B cell (primary cell): ENCODE measurements at regions of chr1 and their contacts with region 1.

Region 1: DNA sequence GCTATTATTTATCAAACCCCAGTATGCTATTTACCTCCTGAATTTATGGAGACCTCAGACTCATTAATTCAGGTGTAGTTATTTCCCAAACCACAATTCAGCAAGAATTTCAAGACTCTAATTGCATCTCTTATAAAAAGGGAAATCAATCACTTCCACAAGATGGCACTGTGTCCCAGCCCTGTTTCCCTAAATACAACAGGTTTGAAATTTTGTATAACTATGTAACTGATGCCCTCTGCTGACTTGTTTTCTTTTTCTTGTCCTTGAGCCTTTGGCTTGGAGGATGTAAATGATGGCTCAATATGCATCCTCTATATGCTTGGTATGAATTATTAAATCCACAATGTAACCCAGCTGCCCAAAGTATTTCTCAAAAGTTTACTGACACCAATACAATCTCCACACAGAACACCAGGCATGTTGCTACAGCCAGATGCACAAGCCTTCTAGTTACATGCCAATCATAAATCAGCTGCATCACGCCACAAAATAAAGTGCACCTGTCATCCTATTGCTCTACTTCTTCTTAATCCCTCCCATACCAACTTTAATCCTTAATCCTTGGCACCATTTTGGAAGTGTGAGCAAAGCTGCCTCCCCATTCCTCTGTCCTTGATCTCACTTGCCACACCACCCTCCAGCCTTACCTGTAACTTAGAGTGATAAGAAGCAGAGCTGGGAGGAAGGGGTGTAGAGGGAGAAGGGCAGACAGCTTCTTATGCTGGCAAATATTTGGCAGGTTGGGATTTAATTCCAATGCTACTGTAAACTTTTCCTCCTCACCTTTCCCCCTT is 9.0 kb downstream of the C1orf105 start:
- DNase-seq: peak; percentile 71
- ATAC-seq: peak; percentile 76
- H3K4me3 ChIP-seq: no peak overlapping the region
- H3K4me3 Mint-ChIP-seq: no peak overlapping the region
- H3K27ac ChIP-seq: no peak overlapping the region
- H3K27ac Mint-ChIP-seq: no peak overlapping the region
- H3K4me1 ChIP-seq: peaks cover 10 to 12% of the 10 kb centered on the region in 2 donors
- H3K4me1 Mint-ChIP-seq: peaks cover 14% of the 10 kb centered on the region
- H3K27me3 ChIP-seq: no peaks in the 10 kb centered on the region
- H3K27me3 Mint-ChIP-seq: no peaks in the 10 kb centered on the region
- CTCF ChIP-seq: peak; percentile 71

Region 2: DNA sequence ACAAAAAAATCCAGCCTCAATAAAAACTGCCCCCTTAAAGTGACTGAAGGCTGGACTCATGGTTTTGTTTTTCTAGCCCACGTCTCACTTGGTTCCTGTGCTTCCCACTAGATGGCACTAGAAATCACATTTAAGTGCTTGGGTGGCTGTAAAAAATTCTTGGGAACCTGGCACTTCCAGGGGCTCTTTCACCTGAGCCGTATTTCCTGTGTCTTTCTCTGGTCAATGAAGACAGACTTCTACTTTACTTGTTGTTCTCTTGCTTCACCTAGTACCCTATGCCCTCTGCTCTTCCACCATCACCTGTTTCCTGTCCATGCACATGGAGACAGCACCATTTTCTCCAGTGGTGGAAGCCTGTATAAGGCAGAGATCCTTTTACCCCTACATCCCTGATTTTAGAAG is 628.0 kb before region 1 on chr1:
- CTCF ChIA-PET with region 1: interaction called, 5 read pairs
- POLR2A ChIA-PET with region 1: no interaction called
- intact Hi-C with region 1: loop called (anchors 1 kb)
- DNase-seq: peak; percentile 38
- ATAC-seq: peak; percentile 51
- H3K4me3 ChIP-seq: no peak overlapping the region
- H3K4me3 Mint-ChIP-seq: no peak overlapping the region
- H3K27ac ChIP-seq: no peak overlapping the region
- H3K27ac Mint-ChIP-seq: no peak overlapping the region
- H3K4me1 ChIP-seq: peaks cover 7 to 11% of the 10 kb centered on the region in 2 donors
- H3K4me1 Mint-ChIP-seq: peaks cover 15% of the 10 kb centered on the region
- H3K27me3 ChIP-seq: no peaks in the 10 kb centered on the region
- H3K27me3 Mint-ChIP-seq: no peaks in the 10 kb centered on the region
- CTCF ChIP-seq: peak; percentile 82

Region 3: GRCh38 chr1:172089768-172090510 is 339.6 kb before region 1 on chr1:
- CTCF ChIA-PET with region 1: interaction called, 23 read pairs
- POLR2A ChIA-PET with region 1: no interaction called
- intact Hi-C with region 1: loop called (anchors 1 kb)
- DNase-seq: peak; percentile 75
- ATAC-seq: peak; percentile 80
- H3K4me3 ChIP-seq: peak overlapping the region in 1 of 5 experiments; percentile 7
- H3K4me3 Mint-ChIP-seq: no peak overlapping the region
- H3K27ac ChIP-seq: no peak overlapping the region
- H3K27ac Mint-ChIP-seq: no peak overlapping the region
- H3K4me1 ChIP-seq: no peaks in the 10 kb centered on the region
- H3K4me1 Mint-ChIP-seq: peaks cover 9% of the 10 kb centered on the region
- H3K27me3 ChIP-seq: no peaks in the 10 kb centered on the region
- H3K27me3 Mint-ChIP-seq: no peaks in the 10 kb centered on the region
- CTCF ChIP-seq: peak; percentile 84

Region 4: DNA sequence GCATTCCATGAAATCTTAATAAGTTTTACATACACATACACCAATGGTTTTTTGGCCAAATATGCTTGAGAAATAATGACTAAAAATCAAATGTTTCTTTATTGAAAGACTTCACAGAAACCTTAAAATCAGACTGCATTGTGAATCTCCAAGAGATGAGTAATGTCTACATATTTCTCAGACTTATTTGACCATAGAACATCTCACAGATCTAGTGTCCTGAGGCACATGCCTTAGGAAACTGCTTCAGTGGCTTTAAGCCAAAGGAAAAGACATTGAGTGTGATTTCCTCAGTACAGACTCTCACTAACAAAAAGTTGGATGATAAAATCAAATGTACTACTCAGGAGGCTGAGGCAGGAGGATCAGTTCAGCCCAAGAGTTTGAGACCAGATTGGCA is 15.2 kb before region 1 on chr1:
- CTCF ChIA-PET with region 1: interaction called, 14 read pairs
- POLR2A ChIA-PET with region 1: no interaction called
- intact Hi-C with region 1: no loop called
- DNase-seq: no peak
- ATAC-seq: no peak
- H3K4me3 ChIP-seq: no peak overlapping the region
- H3K4me3 Mint-ChIP-seq: no peak overlapping the region
- H3K27ac ChIP-seq: no peak overlapping the region
- H3K27ac Mint-ChIP-seq: no peak overlapping the region
- H3K4me1 ChIP-seq: no peaks in the 10 kb centered on the region
- H3K4me1 Mint-ChIP-seq: no peaks in the 10 kb centered on the region
- H3K27me3 ChIP-seq: no peaks in the 10 kb centered on the region
- H3K27me3 Mint-ChIP-seq: no peaks in the 10 kb centered on the region
- CTCF ChIP-seq: no peak

Region 5: DNA sequence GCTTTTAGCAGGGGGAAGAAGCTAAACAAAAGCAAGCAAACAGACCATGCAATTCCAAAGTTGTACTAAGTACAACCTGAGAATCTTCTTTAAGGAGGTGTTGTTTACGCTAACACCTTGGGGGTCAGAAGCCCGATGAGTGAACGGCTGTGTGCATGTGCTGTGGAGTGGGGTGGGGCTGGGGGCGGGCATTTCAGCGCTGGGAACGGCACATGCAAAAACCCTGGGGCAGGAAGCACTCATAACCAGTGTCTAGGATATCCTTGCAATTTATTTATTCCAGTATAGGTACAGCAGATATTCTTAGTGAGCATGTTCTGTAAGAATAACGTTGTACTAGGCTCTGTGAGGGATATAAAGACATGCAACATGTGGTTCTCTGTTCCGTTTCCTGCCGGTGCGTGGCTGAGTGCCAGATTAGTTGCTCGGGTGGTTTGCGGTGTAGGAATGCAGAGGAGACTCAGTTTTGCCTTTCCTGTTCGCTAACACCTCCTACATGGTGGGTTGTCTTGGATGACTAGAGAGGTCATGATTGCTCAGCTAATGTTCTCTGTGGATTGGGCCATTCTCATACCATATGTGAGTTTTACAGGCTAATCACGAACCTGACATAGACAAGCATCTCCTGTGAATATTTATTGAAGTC is 233.1 kb after region 1 on chr1:
- CTCF ChIA-PET with region 1: no interaction called
- POLR2A ChIA-PET with region 1: no interaction called
- intact Hi-C with region 1: no loop called
- DNase-seq: peak; percentile 56
- ATAC-seq: peak; percentile 66
- H3K4me3 ChIP-seq: no peak overlapping the region
- H3K4me3 Mint-ChIP-seq: peak overlapping the region; percentile 66
- H3K27ac ChIP-seq: no peak overlapping the region
- H3K27ac Mint-ChIP-seq: no peak overlapping the region
- H3K4me1 ChIP-seq: peaks cover 9 to 12% of the 10 kb centered on the region in 2 donors
- H3K4me1 Mint-ChIP-seq: peaks cover 13% of the 10 kb centered on the region
- H3K27me3 ChIP-seq: no peaks in the 10 kb centered on the region
- H3K27me3 Mint-ChIP-seq: no peaks in the 10 kb centered on the region
- CTCF ChIP-seq: no peak

Region 6: DNA sequence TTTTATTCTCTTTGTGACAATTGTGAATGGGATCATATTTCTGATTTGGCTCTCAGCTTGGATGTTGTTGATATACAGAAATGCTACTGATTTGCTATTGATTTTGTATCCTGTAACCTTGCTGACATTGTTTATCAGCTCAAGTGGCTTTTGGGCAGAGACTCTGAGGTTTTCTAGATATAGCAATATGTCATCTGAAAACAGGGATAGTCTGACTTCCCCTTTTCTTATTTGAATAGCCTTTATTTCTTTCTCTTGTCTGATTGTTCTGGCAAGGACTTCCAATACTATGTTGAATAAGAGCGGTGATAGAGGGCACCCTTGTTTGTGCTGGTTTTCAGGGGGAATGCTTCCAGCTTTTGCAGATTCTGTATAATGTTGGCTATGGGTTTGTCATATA is 380.2 kb after region 1 on chr1:
- CTCF ChIA-PET with region 1: no interaction called
- POLR2A ChIA-PET with region 1: no interaction called
- intact Hi-C with region 1: no loop called
- DNase-seq: no peak
- ATAC-seq: no peak
- H3K4me3 ChIP-seq: no peak overlapping the region
- H3K4me3 Mint-ChIP-seq: no peak overlapping the region
- H3K27ac ChIP-seq: no peak overlapping the region
- H3K27ac Mint-ChIP-seq: no peak overlapping the region
- H3K4me1 ChIP-seq: peaks cover 0 to 4% of the 10 kb centered on the region in 2 donors
- H3K4me1 Mint-ChIP-seq: peaks cover 18% of the 10 kb centered on the region
- H3K27me3 ChIP-seq: no peaks in the 10 kb centered on the region
- H3K27me3 Mint-ChIP-seq: no peaks in the 10 kb centered on the region
- CTCF ChIP-seq: no peak